Activated naive CD4-positive, alpha-beta T cell treated with anti-CD3 and anti-CD28 coated beads for 36 hours (primary cell): ENCODE measurements at regions of chr12 and their contacts with region 1.

Region 1: DNA sequence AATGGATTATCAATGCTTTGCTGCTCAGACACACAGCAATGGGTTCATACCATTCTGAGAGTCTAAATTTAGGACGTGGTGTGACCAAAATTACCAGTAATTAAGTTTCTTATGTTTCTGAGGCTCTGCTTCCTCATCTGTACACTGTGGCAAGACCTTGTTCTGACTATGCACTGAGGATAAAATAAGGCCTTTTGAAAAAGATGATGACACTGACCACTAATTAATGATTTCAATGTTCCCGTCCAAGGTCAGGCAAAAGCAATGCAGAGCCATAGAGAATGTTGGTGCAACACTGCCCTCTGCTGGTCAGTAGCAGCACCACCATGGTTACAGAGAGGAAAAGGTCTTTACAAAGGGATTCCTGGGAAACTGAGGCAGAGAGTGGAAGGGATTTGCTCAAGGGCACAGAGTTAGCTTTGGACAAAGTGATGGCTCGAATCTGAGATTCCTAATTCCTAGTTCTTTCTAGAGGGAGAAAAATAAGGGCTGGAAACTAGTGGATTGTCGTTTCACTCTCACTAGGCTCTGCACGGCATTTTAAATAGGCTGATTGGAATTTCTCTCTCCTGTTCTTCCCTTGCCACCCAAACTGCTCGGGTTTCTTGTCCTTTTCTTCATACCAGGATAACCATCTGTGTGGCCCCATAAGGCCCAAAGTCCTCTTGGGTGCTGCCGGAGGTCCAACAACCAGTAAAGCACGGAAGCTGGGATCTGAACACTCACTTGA is 22.3 kb upstream of the P2RX7 start:
- DNase-seq: peak; percentile 80
- H3K4me3 Mint-ChIP-seq: no peak overlapping the region
- H3K27ac Mint-ChIP-seq: no peak overlapping the region
- H3K4me1 Mint-ChIP-seq: peaks cover 4% of the 10 kb centered on the region
- H3K27me3 Mint-ChIP-seq: no peaks in the 10 kb centered on the region

Region 2: DNA sequence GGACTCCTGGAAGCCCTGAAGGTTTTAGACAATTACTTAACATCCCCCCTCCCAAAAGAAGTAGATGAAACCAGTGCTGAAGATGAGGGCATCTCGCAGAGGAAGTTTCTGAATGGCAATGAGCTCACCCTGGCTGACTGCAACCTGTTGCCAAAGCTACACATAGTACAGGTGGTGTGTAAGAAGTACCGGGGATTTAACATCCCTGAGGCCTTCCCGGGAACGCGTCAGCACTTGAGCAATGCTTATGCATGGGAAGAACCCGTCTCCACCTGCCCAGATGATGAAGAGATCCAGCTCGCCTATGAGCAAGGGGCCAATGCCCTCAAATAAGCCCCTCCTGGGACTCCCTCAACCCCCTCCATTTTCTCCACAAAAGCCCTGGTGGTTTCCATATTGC is 195.6 kb before region 1 on chr12:
- CTCF ChIA-PET with region 1: no interaction called
- intact Hi-C with region 1: no loop called
- DNase-seq: no peak
- H3K4me3 Mint-ChIP-seq: no peak overlapping the region
- H3K27ac Mint-ChIP-seq: no peak overlapping the region
- H3K4me1 Mint-ChIP-seq: no peaks in the 10 kb centered on the region
- H3K27me3 Mint-ChIP-seq: no peaks in the 10 kb centered on the region

Region 3: GRCh38 chr12:121005346-121005815 is 105.0 kb before region 1 on chr12:
- CTCF ChIA-PET with region 1: interaction called, 4 read pairs
- intact Hi-C with region 1: loop called (anchors 1 kb)
- DNase-seq: peak; percentile 76
- H3K4me3 Mint-ChIP-seq: no peak overlapping the region
- H3K27ac Mint-ChIP-seq: no peak overlapping the region
- H3K4me1 Mint-ChIP-seq: no peaks in the 10 kb centered on the region
- H3K27me3 Mint-ChIP-seq: no peaks in the 10 kb centered on the region

Region 4: GRCh38 chr12:121223292-121224285 is 113.2 kb after region 1 on chr12:
- CTCF ChIA-PET with region 1: interaction called, 4 read pairs
- intact Hi-C with region 1: loop called (anchors 5 kb)
- DNase-seq: peak; percentile 67
- H3K4me3 Mint-ChIP-seq: no peak overlapping the region
- H3K27ac Mint-ChIP-seq: peak overlapping the region; percentile 62
- H3K4me1 Mint-ChIP-seq: peaks cover 42% of the 10 kb centered on the region
- H3K27me3 Mint-ChIP-seq: no peaks in the 10 kb centered on the region